ENCODE measurements at regions of chr17 and their contacts with region 1.

Region 1: DNA sequence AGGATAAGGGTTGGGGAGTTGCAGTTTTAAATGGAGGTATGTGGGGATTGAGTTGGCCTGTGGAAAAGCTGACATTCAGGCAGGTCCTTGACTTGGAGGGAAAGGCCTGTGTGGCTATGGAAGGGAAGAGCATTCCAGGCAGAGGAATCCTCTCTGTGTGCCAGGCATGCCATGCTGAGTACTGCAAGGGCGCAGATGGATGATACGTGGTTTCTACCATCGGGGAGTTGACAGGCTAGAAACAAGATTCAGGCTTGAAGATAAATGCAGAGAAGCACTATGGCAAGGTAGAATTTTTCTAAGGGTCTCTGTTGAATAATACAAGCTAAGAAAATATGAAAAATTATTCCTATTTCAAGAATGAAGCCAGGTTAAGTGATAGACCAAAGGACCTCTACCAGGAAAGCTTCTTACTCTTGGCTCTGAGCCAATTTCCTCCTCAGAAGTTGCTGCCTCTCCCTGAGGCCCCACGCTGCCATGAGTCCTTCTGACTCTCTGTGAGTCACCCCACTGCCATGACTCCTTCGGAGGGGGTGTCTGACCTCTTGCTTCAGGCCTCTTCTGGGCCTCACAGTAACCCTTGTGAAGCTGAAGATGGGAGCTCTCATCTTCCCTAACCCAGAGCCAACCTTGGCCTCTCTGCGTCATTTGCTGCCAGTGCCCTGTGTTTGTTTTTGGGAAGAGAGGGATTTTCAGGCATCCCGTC is 75.8 kb downstream of the WNT3 start:
- DNase-seq: peak; percentile 84
- H3K4me3 Mint-ChIP-seq: no peak overlapping the region
- H3K27ac Mint-ChIP-seq: peak overlapping the region; percentile 28
- H3K4me1 Mint-ChIP-seq: peaks cover 28% of the 10 kb centered on the region
- H3K27me3 Mint-ChIP-seq: no peaks in the 10 kb centered on the region
- CTCF ChIP-seq: no peak

Region 2: GRCh38 chr17:46764709-46765401 is 22.1 kb after region 1 on chr17:
- CTCF ChIA-PET with region 1: no interaction called
- intact Hi-C with region 1: loop called (anchors 2 kb)
- DNase-seq: no peak
- H3K4me3 Mint-ChIP-seq: no peak overlapping the region
- H3K27ac Mint-ChIP-seq: no peak overlapping the region
- H3K4me1 Mint-ChIP-seq: peaks cover 5% of the 10 kb centered on the region
- H3K27me3 Mint-ChIP-seq: no peaks in the 10 kb centered on the region
- CTCF ChIP-seq: no peak

Region 3: GRCh38 chr17:46777943-46778915 is 35.5 kb after region 1 on chr17:
- CTCF ChIA-PET with region 1: no interaction called
- intact Hi-C with region 1: loop called (anchors 2 kb)
- DNase-seq: no peak
- H3K4me3 Mint-ChIP-seq: no peak overlapping the region
- H3K27ac Mint-ChIP-seq: no peak overlapping the region
- H3K4me1 Mint-ChIP-seq: no peaks in the 10 kb centered on the region
- H3K27me3 Mint-ChIP-seq: peaks cover 37% of the 10 kb centered on the region
- CTCF ChIP-seq: no peak

Region 4: DNA sequence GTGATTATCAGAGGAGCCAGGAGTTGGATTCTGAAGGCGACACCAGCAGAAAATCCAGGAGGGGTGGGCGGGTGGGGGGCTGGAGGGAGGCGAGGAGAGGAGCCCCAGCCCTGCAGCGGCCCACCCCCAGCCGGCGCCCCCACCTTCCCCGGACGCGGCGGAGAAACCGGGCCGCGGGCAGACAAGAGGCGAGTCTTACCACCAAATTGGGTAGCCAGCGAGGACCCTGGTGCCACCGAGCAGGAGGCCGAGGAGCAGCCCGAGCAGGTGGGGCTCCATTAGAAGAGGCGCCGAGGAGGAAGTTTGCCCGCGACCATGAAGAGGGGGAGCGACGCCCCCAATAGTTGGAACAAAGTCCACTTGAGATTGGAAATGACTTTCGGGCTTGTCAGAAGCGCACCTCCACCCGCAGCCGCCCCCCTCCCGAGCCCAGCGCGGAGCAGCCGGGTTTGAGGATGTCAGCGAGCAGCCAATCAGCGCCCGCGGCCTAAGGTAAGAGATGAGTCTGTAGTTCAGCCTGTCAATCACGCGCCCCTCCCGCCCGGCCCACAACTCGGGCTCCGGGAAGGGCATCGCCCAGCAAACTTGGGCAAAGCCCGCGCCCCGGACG is 75.7 kb after region 1 on chr17 and contains the start of gene WNT3:
- CTCF ChIA-PET with region 1: no interaction called
- intact Hi-C with region 1: loop called (anchors 10 kb)
- DNase-seq: no peak
- H3K4me3 Mint-ChIP-seq: peak within 1 kb of the TSS; percentile 62
- H3K27ac Mint-ChIP-seq: no peak within 1 kb of the TSS
- H3K4me1 Mint-ChIP-seq: peaks cover 6% of the 10 kb centered on the region
- H3K27me3 Mint-ChIP-seq: peaks cover 83% of the 10 kb centered on the region
- CTCF ChIP-seq: no peak
- total RNA-seq, gene WNT3: 5.2 and 6.1 TPM in 2 replicates